Dorsolateral prefrontal cortex (tissue), 120 donors: ENCODE measurements at regions of chr5 and their contacts with region 1.

Region 1: GRCh38 chr5:36875790-36876388 is 680 bp upstream of the NIPBL start:
- DNase-seq: peak; percentile 72 to 88 (median 79)
- H3K4me3 ChIP-seq: peak overlapping the region; percentile 56 to 98 (median 88)
- H3K27ac ChIP-seq: peak overlapping the region; percentile 89 to 100 (median 98)
- H3K27me3 ChIP-seq: no peaks in the 10 kb centered on the region
- CTCF ChIP-seq: peak; percentile 15 to 70 (median 55)

Region 2: DNA sequence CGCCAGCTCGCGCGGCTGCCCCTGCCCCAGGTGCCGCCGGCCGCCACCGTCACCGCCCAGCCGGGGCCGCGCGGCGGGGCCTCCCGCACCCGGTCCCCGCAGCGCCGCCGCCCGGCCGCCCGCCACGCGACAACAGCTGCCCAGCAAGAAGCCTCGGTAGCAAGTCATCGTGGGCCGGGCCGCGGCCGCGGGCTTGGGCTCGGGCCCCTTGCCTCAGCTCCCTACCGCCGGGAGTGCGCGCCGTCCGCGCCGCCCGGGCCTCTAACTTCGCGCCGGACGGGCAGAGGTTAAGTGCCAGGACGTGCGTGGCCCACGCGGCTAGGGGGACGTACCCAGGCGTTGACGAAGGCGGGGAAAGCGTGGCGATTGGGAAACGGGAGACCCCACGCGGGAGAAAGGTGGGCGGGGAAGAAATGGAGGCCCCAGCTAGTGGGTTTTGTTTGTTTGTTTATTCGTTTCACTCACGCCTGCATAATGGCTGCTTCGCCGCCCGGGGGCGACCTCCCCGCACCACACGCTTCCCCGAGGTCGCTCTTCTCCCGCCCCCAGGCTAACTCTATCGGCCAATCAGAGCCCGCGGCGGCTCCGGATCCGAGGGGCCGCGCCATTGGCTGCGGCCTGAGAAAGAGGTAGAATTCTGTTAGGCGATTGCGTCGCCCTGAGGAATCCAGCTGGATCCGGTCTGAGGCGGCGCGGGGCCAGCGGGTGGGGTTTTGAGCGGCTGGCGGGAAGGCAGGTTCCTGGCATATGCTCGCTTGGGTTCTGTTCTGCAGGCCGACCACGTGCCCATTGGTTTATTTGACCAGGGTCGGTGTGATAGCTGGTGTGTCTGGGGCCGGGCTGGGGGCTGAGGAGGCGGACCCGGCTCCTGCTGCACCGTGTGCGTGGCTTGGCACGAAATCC is 634.0 kb before region 1 on chr5 and contains the start of gene NADK2:
- intact Hi-C with region 1: loop called (anchors 10 kb)
- DNase-seq: peak; percentile 89 to 96 (median 95)
- H3K4me3 ChIP-seq: peak within 1 kb of the TSS; percentile 73 to 97 (median 89)
- H3K27ac ChIP-seq: peak within 1 kb of the TSS; percentile 78 to 99 (median 97)
- H3K27me3 ChIP-seq: no peaks in the 10 kb centered on the region
- CTCF ChIP-seq: peak; percentile 37 to 90 (median 70)
- total RNA-seq, gene NADK2: 33.0 to 108 (median 60.6) TPM

Region 3: GRCh38 chr5:36739751-36740221 is 136.1 kb before region 1 on chr5:
- intact Hi-C with region 1: loop called (anchors 2 to 5 kb)
- DNase-seq: peak in 7 of 10 donors; percentile 9 to 72 (median 46)
- H3K4me3 ChIP-seq: peak overlapping the region in 2 of 59 donors; percentile 24 to 37
- H3K27ac ChIP-seq: no peak overlapping the region
- H3K27me3 ChIP-seq: peaks cover 0 to 34% (median 4%) of the 10 kb centered on the region in 45 donors
- CTCF ChIP-seq: peak in 55 of 56 donors; percentile 59 to 87 (median 73)

Region 4: GRCh38 chr5:36854402-36855140 is 21.3 kb before region 1 on chr5:
- intact Hi-C with region 1: no loop called
- DNase-seq: no peak
- H3K4me3 ChIP-seq: no peak overlapping the region
- H3K27ac ChIP-seq: no peak overlapping the region
- H3K27me3 ChIP-seq: no peaks in the 10 kb centered on the region
- CTCF ChIP-seq: no peak

Region 5: DNA sequence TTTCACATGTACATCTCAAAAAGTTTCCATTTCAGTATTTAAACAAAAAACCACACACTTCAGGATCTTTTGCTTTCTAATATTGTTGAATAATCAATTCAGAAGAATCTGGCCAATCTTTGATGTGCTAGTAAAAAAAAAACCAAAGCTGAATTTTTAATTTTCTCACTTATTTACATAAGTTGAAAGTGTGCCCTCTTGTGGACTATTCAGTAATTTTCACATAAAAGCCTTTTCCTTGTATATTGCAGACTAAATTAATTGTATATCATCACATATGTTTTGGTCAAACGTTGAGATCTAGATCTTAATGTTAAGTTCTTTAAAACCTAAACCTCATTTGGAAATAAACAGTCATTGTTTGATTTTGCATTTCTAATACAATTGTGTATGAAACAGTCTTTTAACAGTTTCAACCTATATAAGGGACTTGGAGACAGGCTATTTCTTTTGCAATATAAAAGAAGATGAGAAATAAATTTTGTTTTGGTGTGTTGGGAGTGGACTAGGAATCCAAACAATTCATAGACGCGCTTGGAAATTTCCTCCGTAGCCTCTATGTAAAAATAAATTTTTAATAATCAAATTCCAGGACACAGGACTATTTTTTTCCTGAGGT is 68.8 kb after region 1 on chr5:
- intact Hi-C with region 1: loop called (anchors 1 to 2 kb)
- DNase-seq: no peak
- H3K4me3 ChIP-seq: no peak overlapping the region
- H3K27ac ChIP-seq: peak overlapping the region in 3 of 59 donors; percentile 12 to 72 (median 64)
- H3K27me3 ChIP-seq: no peaks in the 10 kb centered on the region
- CTCF ChIP-seq: peak; percentile 49 to 88 (median 68)

Region 6: DNA sequence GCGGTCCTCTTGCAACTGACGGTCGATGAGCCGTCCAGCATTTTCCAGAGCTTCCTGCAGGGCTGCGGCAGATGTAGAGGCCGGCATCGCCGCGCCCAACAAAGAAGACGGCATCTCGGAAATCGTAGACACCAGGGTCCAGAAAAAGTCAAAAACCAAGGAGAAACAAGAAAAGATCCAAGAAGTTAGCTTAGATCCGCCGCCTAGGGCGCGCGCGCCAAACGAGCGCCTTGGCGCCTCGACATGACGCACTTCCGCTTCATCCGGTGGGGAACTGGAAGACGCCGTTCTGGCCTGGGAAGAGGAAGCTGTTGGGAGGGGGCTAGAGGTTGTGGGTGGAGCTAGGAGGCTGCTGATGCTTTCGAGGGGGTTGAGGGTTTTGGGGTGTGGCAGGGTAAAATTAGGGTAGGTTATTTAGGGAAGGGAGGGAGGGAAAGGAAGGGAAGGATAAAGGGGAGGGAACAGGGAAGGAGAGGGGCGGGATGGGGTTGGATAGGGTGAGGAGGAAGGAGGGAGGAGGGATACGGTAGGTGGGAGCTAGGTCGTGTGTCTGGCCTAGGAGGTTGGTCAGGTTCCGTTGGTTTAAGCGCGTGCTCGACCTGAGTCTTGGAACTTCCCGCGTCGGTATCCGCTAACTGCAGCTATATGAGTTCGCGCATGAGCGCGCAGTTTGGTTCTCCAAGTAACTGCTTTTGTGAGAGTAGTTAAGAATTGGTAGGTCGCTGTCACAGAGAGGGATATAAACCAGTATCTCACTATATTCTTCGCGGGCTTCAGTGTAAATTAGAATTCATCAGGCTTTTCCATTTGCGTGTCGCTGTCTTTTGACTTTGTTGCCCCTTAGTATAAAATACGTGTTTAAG is 495.2 kb after region 1 on chr5 and contains the start of gene NUP155:
- intact Hi-C with region 1: loop called in 1 of 2 experiments (anchors 10 kb)
- DNase-seq: peak; percentile 87 to 96 (median 92)
- H3K4me3 ChIP-seq: peak within 1 kb of the TSS; percentile 52 to 100 (median 94)
- H3K27ac ChIP-seq: peak within 1 kb of the TSS in 56 of 59 donors; percentile 16 to 89 (median 80)
- H3K27me3 ChIP-seq: no peaks in the 10 kb centered on the region
- CTCF ChIP-seq: peak in 43 of 56 donors; percentile 8 to 59 (median 34)
- total RNA-seq, gene NUP155: 16.3 to 29.8 (median 23.4) TPM